ENCODE measurements at regions of chr5 and their contacts with region 1.

Region 1: DNA sequence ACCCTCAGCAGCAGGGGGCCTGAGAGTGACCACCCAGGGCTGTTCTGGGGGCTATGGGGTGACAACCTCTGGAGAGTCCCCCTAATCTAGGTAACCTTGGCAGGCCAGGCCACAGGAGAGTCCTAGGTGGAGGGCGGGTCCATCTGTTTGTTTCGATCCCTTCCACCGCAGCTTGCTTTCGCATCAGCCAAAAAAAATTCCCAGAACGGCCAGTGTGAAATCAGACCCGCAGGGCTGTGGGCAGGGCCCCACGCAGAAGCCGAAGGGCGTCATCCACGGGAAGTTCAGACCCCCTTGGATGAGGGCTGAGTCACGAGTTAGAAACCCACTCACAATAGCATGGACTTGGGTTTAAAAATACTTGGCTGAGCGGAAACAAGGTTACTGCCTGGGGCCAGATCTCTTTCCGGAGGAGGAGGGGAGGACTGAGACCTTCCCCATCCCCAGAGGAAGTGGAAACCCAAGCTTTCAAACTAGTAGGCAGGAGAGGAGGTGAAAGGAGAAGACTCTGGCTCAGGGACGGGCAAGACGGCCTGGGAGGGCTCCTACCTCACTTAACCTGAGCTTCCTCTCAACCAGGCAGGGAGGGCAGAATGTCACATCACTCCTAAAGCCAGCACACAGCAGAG is 8.5 kb downstream of the STK10 start:
- DNase-seq: peak in 8 of 9 donors; percentile 40 to 68 (median 50)
- ATAC-seq: peak; percentile 8
- H3K4me3 ChIP-seq: peak overlapping the region; percentile 76
- H3K4me3 Mint-ChIP-seq: peak overlapping the region; percentile 78 to 99 (median 90)
- H3K27ac ChIP-seq: peak overlapping the region; percentile 92
- H3K27ac Mint-ChIP-seq: peak overlapping the region; percentile 94 to 100 (median 98)
- H3K4me1 ChIP-seq: peaks cover 86 to 87% of the 10 kb centered on the region in 2 donors
- H3K4me1 Mint-ChIP-seq: peaks cover 48 to 95% (median 84%) of the 10 kb centered on the region in 7 donors
- H3K27me3 ChIP-seq: no peaks in the 10 kb centered on the region
- H3K27me3 Mint-ChIP-seq: no peaks in the 10 kb centered on the region

Region 2: DNA sequence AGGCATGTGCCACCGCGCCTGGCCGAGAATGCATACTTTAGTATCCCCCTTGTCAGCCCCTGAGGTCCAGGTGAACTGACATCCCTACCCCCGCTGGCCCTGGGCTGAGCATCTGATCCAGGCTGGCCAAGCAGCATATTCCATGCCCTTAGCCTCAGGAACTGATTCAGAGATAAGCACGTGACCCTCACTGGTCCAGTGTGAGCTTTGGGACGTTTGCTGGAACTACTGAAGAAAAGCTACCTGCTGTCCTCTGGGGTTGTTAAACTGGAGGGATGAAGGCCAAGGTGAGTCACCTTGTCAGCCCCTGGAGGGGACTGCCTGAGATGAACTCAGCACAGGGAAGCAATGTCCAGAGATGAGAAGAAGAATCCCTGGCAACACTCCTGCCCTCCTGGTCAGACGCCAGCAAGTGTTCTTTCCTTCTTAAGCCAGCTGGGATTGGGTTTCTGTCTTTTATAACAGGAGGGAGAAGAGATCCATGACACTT is 113.9 kb before region 1 on chr5:
- CTCF ChIA-PET with region 1: interaction called, 6 read pairs
- POLR2A ChIA-PET with region 1: interaction called, 44 read pairs
- intact Hi-C with region 1: loop called in 1 of 2 experiments (anchors 1 kb)
- DNase-seq: no peak
- ATAC-seq: no peak
- H3K4me3 ChIP-seq: no peak overlapping the region
- H3K4me3 Mint-ChIP-seq: peak overlapping the region; percentile 7 to 86 (median 78)
- H3K27ac ChIP-seq: peak overlapping the region; percentile 82
- H3K27ac Mint-ChIP-seq: peak overlapping the region; percentile 87 to 99 (median 96)
- H3K4me1 ChIP-seq: peaks cover 36 to 48% of the 10 kb centered on the region in 2 donors
- H3K4me1 Mint-ChIP-seq: peaks cover 53 to 85% (median 75%) of the 10 kb centered on the region in 7 donors
- H3K27me3 ChIP-seq: no peaks in the 10 kb centered on the region
- H3K27me3 Mint-ChIP-seq: no peaks in the 10 kb centered on the region

Region 3: GRCh38 chr5:172114875-172115422 is 64.5 kb before region 1 on chr5:
- CTCF ChIA-PET with region 1: interaction called, 3 read pairs
- POLR2A ChIA-PET with region 1: interaction called, 68 read pairs
- intact Hi-C with region 1: loop called (anchors 1 kb)
- DNase-seq: peak; percentile 35 to 78 (median 44)
- ATAC-seq: peak; percentile 70
- H3K4me3 ChIP-seq: peak overlapping the region; percentile 50
- H3K4me3 Mint-ChIP-seq: peak overlapping the region; percentile 54 to 90 (median 80)
- H3K27ac ChIP-seq: peak overlapping the region; percentile 70
- H3K27ac Mint-ChIP-seq: peak overlapping the region; percentile 75 to 98 (median 94)
- H3K4me1 ChIP-seq: peaks cover 67 to 80% of the 10 kb centered on the region in 2 donors
- H3K4me1 Mint-ChIP-seq: peaks cover 48 to 86% (median 72%) of the 10 kb centered on the region in 7 donors
- H3K27me3 ChIP-seq: no peaks in the 10 kb centered on the region
- H3K27me3 Mint-ChIP-seq: no peaks in the 10 kb centered on the region

Region 4: DNA sequence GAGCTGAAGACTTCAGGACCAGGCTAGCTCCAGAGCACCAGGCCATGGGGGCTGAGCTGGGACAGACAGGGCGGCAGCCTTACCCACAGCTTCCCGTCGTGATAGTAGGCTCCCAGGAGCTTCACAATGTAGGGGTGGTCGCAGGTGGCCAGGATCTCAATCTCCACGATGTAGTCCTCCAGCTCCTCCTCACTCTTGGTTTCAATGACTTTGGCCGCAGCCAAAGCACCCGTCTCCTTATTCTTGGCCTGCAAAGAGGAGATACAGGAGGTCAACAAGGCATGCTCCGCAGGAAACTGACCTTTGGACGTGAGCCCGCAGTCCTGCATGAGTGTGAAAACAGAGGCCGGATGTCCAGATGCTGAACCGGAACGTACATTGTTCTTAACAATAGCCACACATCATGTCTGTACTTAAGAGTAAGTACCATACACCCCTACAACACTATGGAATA is 22.9 kb before region 1 on chr5:
- CTCF ChIA-PET with region 1: interaction called, 5 read pairs
- POLR2A ChIA-PET with region 1: interaction called, 57 read pairs
- intact Hi-C with region 1: loop called (anchors 1 to 2 kb)
- DNase-seq: no peak
- ATAC-seq: no peak
- H3K4me3 ChIP-seq: no peak overlapping the region
- H3K4me3 Mint-ChIP-seq: peak overlapping the region in 1 of 10 donors; percentile 8
- H3K27ac ChIP-seq: no peak overlapping the region
- H3K27ac Mint-ChIP-seq: peak overlapping the region in 8 of 9 donors; percentile 20 to 87 (median 75)
- H3K4me1 ChIP-seq: peaks cover 32 to 39% of the 10 kb centered on the region in 2 donors
- H3K4me1 Mint-ChIP-seq: peaks cover 59 to 83% (median 74%) of the 10 kb centered on the region in 7 donors
- H3K27me3 ChIP-seq: no peaks in the 10 kb centered on the region
- H3K27me3 Mint-ChIP-seq: no peaks in the 10 kb centered on the region

Region 5: GRCh38 chr5:172283020-172283861 is 103.8 kb after region 1 on chr5 and contains the start of gene UBTD2:
- CTCF ChIA-PET with region 1: interaction called, 3 read pairs
- POLR2A ChIA-PET with region 1: interaction called, 11 read pairs
- intact Hi-C with region 1: loop called (anchors 1 kb)
- DNase-seq: peak in 7 of 9 donors; percentile 51 to 84 (median 67)
- ATAC-seq: peak; percentile 89
- H3K4me3 ChIP-seq: peak within 1 kb of the TSS; percentile 73
- H3K4me3 Mint-ChIP-seq: peak within 1 kb of the TSS; percentile 85 to 94 (median 90)
- H3K27ac ChIP-seq: peak within 1 kb of the TSS; percentile 61
- H3K27ac Mint-ChIP-seq: peak within 1 kb of the TSS; percentile 67 to 94 (median 75)
- H3K4me1 ChIP-seq: peaks cover 11 to 13% of the 10 kb centered on the region in 2 donors
- H3K4me1 Mint-ChIP-seq: peaks cover 10 to 34% (median 29%) of the 10 kb centered on the region in 7 donors
- H3K27me3 ChIP-seq: no peaks in the 10 kb centered on the region
- H3K27me3 Mint-ChIP-seq: peaks cover 0 to 24% (median 0%) of the 10 kb centered on the region in 5 donors
- total RNA-seq, gene UBTD2: 2.3 to 8.3 (median 5.9) TPM